PC-9 (cell line): ENCODE measurements at regions of chr19 and their contacts with region 1.

Region 1: DNA sequence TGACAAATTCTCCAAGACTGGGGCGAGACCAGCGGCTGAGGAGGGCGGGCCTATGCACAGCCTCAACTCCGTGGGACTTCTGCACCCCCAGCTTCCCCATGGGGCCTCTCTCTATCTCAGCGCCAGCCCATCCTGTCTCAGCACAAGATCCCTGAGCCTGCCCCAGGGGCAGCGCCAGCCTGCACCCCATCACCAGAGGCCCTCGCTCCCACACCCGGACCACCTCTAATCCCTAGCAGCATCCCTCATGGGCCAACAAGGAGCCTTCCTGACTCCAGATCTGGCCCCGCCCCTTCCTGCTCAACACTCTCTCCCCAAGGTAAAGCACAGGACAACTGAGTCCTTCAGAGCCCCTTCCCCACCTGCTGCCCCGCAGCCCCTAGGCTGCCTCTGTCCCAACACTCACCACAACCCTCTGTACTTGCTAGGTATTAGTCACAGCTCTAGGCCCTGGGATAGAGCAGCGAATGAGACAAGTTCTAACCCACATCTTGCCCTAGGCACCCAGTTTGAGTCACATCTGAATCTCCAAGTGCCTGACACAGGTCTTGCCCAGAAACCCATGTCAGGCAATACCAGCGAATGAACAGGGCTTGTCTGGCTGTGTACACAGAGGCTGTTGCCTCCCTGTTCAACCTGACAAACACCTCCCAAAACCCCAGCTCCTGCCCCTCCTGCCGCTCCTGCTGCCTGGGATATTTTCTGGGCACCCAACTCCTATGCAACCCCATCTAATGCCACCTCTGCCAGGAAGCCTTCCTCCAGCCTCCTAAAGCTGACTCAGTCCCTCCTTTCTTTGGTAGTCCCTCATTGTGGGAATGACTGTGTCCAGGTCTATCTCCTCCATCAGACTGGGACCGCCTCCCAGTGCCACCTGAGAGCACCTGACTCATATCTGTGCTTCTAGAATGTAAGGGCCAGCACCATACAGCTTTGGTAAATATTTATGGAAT is 18.6 kb downstream of the GRIK5 start:
- DNase-seq: peak; percentile 78 to 96
- H3K4me3 ChIP-seq: no peak overlapping the region
- H3K27ac ChIP-seq: peak overlapping the region; percentile 76
- H3K4me1 ChIP-seq: peaks cover 35% of the 10 kb centered on the region
- H3K27me3 ChIP-seq: no peaks in the 10 kb centered on the region
- CTCF ChIP-seq: no peak

Region 2: DNA sequence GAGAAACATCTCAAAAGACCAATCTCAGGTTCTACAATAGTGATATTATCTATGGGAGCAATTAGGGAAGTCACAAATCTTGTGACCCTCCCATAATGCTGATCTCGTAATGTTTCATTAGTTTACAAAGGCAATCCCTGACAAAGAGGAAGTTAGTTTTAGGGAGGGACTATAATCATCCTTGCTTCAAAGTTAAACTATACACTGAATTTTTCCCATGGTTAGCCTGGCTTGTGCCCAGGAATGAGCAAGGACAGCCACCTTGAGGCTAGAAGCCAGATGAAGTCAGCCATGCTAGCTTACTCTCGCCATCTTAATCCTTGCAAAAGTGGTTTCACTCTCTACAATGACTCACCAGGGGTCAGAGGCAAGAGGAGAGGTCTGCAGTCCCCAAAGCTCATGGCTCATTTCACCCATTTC is 249.6 kb before region 1 on chr19:
- CTCF ChIA-PET with region 1: no interaction called
- POLR2A ChIA-PET with region 1: no interaction called
- intact Hi-C with region 1: no loop called
- DNase-seq: peak in 1 of 2 experiments; percentile 87
- H3K4me3 ChIP-seq: no peak overlapping the region
- H3K27ac ChIP-seq: peak overlapping the region; percentile 73
- H3K4me1 ChIP-seq: peaks cover 41% of the 10 kb centered on the region
- H3K27me3 ChIP-seq: 0 out of 2 replicates have a peak, but pooled peaks cover 3% of the 10 kb centered on the region
- CTCF ChIP-seq: no peak

Region 3: GRCh38 chr19:41993612-41994483 is 57.6 kb before region 1 on chr19 and contains the start of gene ATP1A3:
- CTCF ChIA-PET with region 1: no interaction called
- POLR2A ChIA-PET with region 1: no interaction called
- intact Hi-C with region 1: no loop called
- DNase-seq: peak in 1 of 2 experiments; percentile 33
- H3K4me3 ChIP-seq: peak within 1 kb of the TSS; percentile 38; the same call in 1 of the 2 replicates
- H3K27ac ChIP-seq: no peak within 1 kb of the TSS
- H3K4me1 ChIP-seq: no peaks in the 10 kb centered on the region
- H3K27me3 ChIP-seq: peaks cover 78% of the 10 kb centered on the region
- CTCF ChIP-seq: no peak
- total RNA-seq, gene ATP1A3: not detected in 2 replicates

Region 4: DNA sequence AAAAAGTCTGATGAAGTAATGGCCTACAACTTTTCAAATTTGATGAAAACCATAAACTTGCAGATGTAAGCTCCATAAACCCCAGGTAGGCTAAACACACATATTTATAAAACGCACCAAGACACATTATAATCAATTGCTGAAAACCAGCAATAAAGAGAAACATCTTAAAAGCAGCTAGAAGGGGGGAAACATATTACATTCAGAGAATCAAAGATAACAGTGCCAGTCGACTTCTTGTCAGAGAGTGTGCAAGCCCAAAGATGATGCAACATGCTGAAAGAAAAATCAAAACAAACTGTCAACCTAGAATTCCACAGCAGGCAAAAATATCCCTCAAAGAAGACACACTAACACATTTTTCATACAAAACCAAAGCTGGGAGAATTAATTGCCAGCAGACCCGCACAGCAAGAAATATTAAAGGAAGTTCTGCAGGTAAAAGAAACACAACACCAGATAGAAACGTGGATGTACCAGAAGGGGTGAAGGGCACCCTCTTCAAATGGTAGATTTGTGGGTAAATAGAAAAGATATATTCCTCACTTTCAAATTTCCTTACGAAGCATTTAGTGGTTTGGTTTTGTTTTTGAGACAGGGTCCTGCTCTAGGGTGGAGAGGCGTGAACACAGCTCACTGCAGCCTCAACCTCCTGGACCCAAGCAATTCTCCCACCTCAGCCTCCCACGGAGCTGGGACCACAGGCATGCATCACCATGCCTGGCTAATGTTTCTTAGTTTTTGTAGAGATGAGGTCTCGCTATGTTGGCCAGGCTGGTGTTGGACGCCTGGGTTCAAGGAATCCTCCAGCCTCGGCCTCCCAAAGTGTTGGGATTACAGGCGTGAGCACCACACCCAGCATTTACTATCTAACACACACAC is 41.0 kb before region 1 on chr19:
- CTCF ChIA-PET with region 1: no interaction called
- POLR2A ChIA-PET with region 1: interaction called, 17 read pairs
- intact Hi-C with region 1: no loop called
- DNase-seq: no peak
- H3K4me3 ChIP-seq: no peak overlapping the region
- H3K27ac ChIP-seq: peak overlapping the region; percentile 28; the same call in 1 of the 2 replicates
- H3K4me1 ChIP-seq: peaks cover 10% of the 10 kb centered on the region; the same call in 1 of the 2 replicates
- H3K27me3 ChIP-seq: 0 out of 2 replicates have a peak, but pooled peaks cover 11% of the 10 kb centered on the region
- CTCF ChIP-seq: no peak